T-cell (primary cell): ENCODE measurements at regions of chr1 and their contacts with region 1.

Region 1: GRCh38 chr1:160078512-160079195 is 2.7 kb upstream of the KCNJ9 start:
- DNase-seq: peak in 29 of 35 experiments; percentile 28 to 69 (median 49)
- ATAC-seq: peak; percentile 70 to 85 (median 81)
- H3K4me3 ChIP-seq: no peak overlapping the region
- H3K4me3 Mint-ChIP-seq: no peak overlapping the region
- H3K27ac ChIP-seq: no peak overlapping the region
- H3K27ac Mint-ChIP-seq: no peak overlapping the region
- H3K4me1 ChIP-seq: peaks cover 0 to 8% of the 10 kb centered on the region in 2 experiments
- H3K4me1 Mint-ChIP-seq: peaks cover 0 to 4% (median 2%) of the 10 kb centered on the region in 3 donors
- H3K27me3 ChIP-seq: peaks cover 15 to 50% of the 10 kb centered on the region in 2 experiments
- H3K27me3 Mint-ChIP-seq: peaks cover 40 to 70% of the 10 kb centered on the region in 2 donors

Region 2: GRCh38 chr1:159929210-159930051 is 149.2 kb before region 1 on chr1:
- CTCF ChIA-PET with region 1: no interaction called
- POLR2A ChIA-PET with region 1: no interaction called
- DNase-seq: no peak
- ATAC-seq: no peak
- H3K4me3 ChIP-seq: no peak overlapping the region
- H3K4me3 Mint-ChIP-seq: no peak overlapping the region
- H3K27ac ChIP-seq: no peak overlapping the region
- H3K27ac Mint-ChIP-seq: no peak overlapping the region
- H3K4me1 ChIP-seq: peaks cover 4 to 10% of the 10 kb centered on the region in 2 experiments
- H3K4me1 Mint-ChIP-seq: peaks cover 12 to 21% (median 17%) of the 10 kb centered on the region in 3 donors
- H3K27me3 ChIP-seq: peaks cover 0 to 8% of the 10 kb centered on the region in 2 experiments
- H3K27me3 Mint-ChIP-seq: no peaks in the 10 kb centered on the region

Region 3: DNA sequence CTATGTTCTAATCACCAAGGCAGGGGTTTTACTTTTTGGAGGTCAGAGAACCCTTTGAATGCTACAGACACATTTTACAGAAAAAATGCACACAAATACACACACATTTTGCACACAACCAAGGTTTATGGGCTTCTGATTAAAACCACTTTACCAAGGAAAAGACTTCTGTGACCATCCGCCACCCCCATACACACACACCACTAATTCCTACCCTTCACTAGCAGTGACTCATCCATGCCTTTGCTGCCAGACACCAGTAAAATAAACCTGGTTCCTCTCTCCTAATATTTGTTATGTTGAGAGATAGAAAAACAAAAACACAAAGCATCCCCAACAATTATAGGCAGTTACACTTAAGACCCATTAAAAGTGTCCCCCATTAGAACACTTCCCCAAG is 59.8 kb before region 1 on chr1:
- CTCF ChIA-PET with region 1: interaction called in 1 of 2 experiments, 10 read pairs
- POLR2A ChIA-PET with region 1: no interaction called
- DNase-seq: no peak
- ATAC-seq: no peak
- H3K4me3 ChIP-seq: no peak overlapping the region
- H3K4me3 Mint-ChIP-seq: no peak overlapping the region
- H3K27ac ChIP-seq: no peak overlapping the region
- H3K27ac Mint-ChIP-seq: no peak overlapping the region
- H3K4me1 ChIP-seq: no peaks in the 10 kb centered on the region
- H3K4me1 Mint-ChIP-seq: no peaks in the 10 kb centered on the region
- H3K27me3 ChIP-seq: peaks cover 0 to 7% of the 10 kb centered on the region in 2 experiments
- H3K27me3 Mint-ChIP-seq: peaks cover 5 to 18% of the 10 kb centered on the region in 2 donors

Region 4: GRCh38 chr1:160046494-160047110 is 32.1 kb before region 1 on chr1:
- CTCF ChIA-PET with region 1: interaction called, 10 to 19 read pairs
- POLR2A ChIA-PET with region 1: no interaction called
- DNase-seq: peak in 13 of 35 experiments; percentile 8 to 63 (median 22)
- ATAC-seq: peak; percentile 75 to 82 (median 80)
- H3K4me3 ChIP-seq: peak overlapping the region in 1 of 2 donors; percentile 58
- H3K4me3 Mint-ChIP-seq: peak overlapping the region; percentile 58 to 70 (median 61)
- H3K27ac ChIP-seq: no peak overlapping the region
- H3K27ac Mint-ChIP-seq: peak overlapping the region; percentile 32 to 57
- H3K4me1 ChIP-seq: peaks cover 0 to 8% of the 10 kb centered on the region in 2 experiments
- H3K4me1 Mint-ChIP-seq: peaks cover 8 to 13% (median 12%) of the 10 kb centered on the region in 3 donors
- H3K27me3 ChIP-seq: peaks cover 0 to 24% of the 10 kb centered on the region in 2 experiments
- H3K27me3 Mint-ChIP-seq: peaks cover 14 to 33% of the 10 kb centered on the region in 2 donors

Region 5: GRCh38 chr1:160116283-160117147 is 37.9 kb after region 1 on chr1:
- CTCF ChIA-PET with region 1: no interaction called
- POLR2A ChIA-PET with region 1: interaction called in 1 of 2 experiments, 10 read pairs
- DNase-seq: no peak
- ATAC-seq: no peak
- H3K4me3 ChIP-seq: no peak overlapping the region
- H3K4me3 Mint-ChIP-seq: no peak overlapping the region
- H3K27ac ChIP-seq: no peak overlapping the region
- H3K27ac Mint-ChIP-seq: peak overlapping the region in 1 of 2 donors; percentile 41
- H3K4me1 ChIP-seq: no peaks in the 10 kb centered on the region
- H3K4me1 Mint-ChIP-seq: no peaks in the 10 kb centered on the region
- H3K27me3 ChIP-seq: peaks cover 0 to 53% of the 10 kb centered on the region in 2 experiments
- H3K27me3 Mint-ChIP-seq: peaks cover 10 to 26% of the 10 kb centered on the region in 2 donors